Activated CD4-positive, alpha-beta T cell treated with anti-CD3 and anti-CD28 coated beads, Interleukin-2, amount 10 ng/mL, durations not matched to agents 24 days and 14 days (primary cell): ENCODE measurements at regions of chr3 and their contacts with region 1.

Region 1: DNA sequence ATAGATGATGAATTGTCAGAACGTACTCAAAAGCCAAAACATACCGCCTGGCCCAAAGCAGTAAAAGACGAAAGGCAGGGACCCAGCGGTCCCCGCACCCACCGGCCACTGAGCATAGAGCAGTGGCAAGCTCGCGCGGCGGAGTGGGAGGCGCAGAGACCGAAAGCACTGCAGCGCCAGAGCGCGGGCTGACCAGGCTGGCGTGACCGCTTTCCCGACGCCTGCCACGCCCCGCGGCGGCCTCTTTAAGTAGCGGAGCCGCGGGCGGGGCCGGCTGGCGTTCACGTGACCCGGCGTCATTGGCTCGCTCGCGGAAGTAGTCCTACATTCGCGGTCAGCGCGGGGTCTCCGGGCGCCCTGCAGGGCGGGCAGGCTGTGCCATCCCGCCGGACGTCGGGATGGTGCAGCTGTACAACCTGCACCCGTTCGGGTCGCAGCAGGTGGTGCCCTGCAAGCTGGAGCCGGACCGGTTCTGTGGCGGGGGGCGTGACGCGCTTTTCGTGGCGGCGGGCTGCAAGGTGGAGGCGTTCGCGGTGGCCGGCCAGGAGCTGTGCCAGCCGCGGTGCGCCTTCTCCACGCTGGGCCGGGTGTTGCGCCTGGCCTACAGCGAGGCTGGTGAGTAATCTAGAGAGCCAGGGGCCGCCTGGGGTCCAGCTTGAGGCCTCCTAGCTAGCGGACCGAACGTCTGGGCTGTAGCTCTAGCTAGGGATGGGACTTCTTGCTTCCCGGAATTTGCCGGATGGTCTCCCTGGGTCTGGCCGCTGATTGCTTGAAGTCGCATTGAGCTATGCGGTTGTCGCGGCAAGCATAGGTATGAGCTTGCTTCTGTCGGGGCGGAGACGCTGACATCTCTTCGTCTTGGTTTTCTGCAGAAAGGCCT is at the start of gene HPS3:
- DNase-seq: peak; percentile 96
- H3K4me3 Mint-ChIP-seq: peak within 1 kb of the TSS; percentile 89
- H3K27ac Mint-ChIP-seq: peak within 1 kb of the TSS; percentile 79
- H3K4me1 Mint-ChIP-seq: peaks cover 35% of the 10 kb centered on the region
- H3K27me3 Mint-ChIP-seq: peaks cover 15% of the 10 kb centered on the region
- total RNA-seq, gene HPS3: 15.3 and 17.4 TPM in 2 replicates

Region 2: DNA sequence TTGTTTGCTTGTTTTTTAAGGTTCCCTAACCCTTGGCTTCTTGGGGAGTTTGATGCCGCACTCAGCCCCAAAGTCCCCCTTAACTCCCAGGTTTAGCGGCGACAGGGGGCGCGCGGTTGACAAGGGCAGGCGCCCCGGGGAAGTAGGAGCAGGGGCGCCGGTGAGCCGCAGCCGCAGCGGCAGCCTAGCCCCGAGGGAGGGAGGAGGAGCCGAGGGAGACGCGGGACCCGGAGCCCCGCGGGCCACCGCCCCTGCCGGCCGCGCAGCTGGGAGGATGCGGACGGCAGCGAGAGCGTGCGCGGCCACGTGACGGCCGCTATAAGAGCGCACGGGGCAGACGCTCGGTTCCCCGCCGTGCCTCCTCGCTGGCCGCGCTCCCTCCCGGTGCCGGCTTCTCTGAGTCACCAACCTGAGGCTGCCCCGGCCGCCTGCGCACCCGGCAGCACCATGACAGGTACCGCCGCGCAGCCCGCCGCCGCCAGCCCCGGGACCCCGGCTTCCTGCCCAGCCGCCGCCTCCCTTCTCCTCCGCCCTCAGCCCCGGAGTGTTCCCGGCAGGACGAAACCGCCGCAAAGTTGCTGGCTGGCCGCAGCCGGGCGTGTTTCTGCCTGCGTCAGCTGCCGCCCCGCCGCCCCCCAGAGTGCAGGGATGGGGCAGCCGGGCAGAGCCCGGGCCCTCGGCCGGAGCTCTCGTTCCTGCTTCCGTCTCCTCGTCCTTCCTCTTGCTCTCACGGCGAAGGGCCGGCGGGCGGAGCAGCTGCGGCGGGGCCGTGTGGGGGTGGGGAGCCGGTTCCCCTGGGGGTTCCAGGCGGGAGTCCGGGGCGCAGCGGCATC is 138.2 kb before region 1 on chr3 and contains the start of gene GYG1:
- intact Hi-C with region 1: loop called (anchors 1 kb)
- DNase-seq: peak; percentile 93
- H3K4me3 Mint-ChIP-seq: peak within 1 kb of the TSS; percentile 82
- H3K27ac Mint-ChIP-seq: peak within 1 kb of the TSS; percentile 87
- H3K4me1 Mint-ChIP-seq: peaks cover 25% of the 10 kb centered on the region
- H3K27me3 Mint-ChIP-seq: no peaks in the 10 kb centered on the region
- total RNA-seq, gene GYG1: 27.4 and 28.0 TPM in 2 replicates

Region 3: GRCh38 chr3:149152420-149152819 is 22.9 kb after region 1 on chr3:
- intact Hi-C with region 1: loop called (anchors 2 kb)
- DNase-seq: peak; percentile 71
- H3K4me3 Mint-ChIP-seq: no peak overlapping the region
- H3K27ac Mint-ChIP-seq: peak overlapping the region; percentile 39
- H3K4me1 Mint-ChIP-seq: peaks cover 16% of the 10 kb centered on the region
- H3K27me3 Mint-ChIP-seq: no peaks in the 10 kb centered on the region

Region 4: GRCh38 chr3:149224736-149225594 is 95.4 kb after region 1 on chr3:
- intact Hi-C with region 1: loop called (anchors 1 kb)
- DNase-seq: peak; percentile 84
- H3K4me3 Mint-ChIP-seq: peak overlapping the region; percentile 77
- H3K27ac Mint-ChIP-seq: peak overlapping the region; percentile 92
- H3K4me1 Mint-ChIP-seq: peaks cover 31% of the 10 kb centered on the region
- H3K27me3 Mint-ChIP-seq: peaks cover 4% of the 10 kb centered on the region

Region 5: GRCh38 chr3:149812606-149813366 is 683.2 kb after region 1 on chr3 and contains the start of gene RNF13:
- intact Hi-C with region 1: loop called (anchors 5 kb)
- DNase-seq: peak; percentile 98
- H3K4me3 Mint-ChIP-seq: peak within 1 kb of the TSS; percentile 97
- H3K27ac Mint-ChIP-seq: peak within 1 kb of the TSS; percentile 100
- H3K4me1 Mint-ChIP-seq: peaks cover 44% of the 10 kb centered on the region
- H3K27me3 Mint-ChIP-seq: peaks cover 11% of the 10 kb centered on the region
- total RNA-seq, gene RNF13: 31.6 and 36.7 TPM in 2 replicates